GM12878 (cell line): ENCODE measurements at regions of chr11 and their contacts with region 1.

Region 1: GRCh38 chr11:118791111-118791965 is at the start of gene DDX6:
- DNase-seq: peak; percentile 19
- ATAC-seq: peak; percentile 69
- H3K4me3 ChIP-seq: peak within 1 kb of the TSS; percentile 81
- H3K27ac ChIP-seq: peak within 1 kb of the TSS; percentile 100
- H3K4me1 ChIP-seq: no peaks in the 10 kb centered on the region; the same call in 1 of the 2 replicates
- H3K27me3 ChIP-seq: no peaks in the 10 kb centered on the region
- CTCF ChIP-seq: peak; percentile 21 to 41 (median 32); a peak in 3 of 6 replicates
- EP300 ChIP-seq: no peak
- POLR2A ChIP-seq: peak; percentile 82
- RAD21 ChIP-seq: peak; percentile 14; the same call in 1 of the 2 replicates
- polyA plus RNA-seq, gene DDX6: 6.6 to 20.0 TPM

Region 2: GRCh38 chr11:118689851-118690552 is 101.3 kb before region 1 on chr11:
- CTCF ChIA-PET with region 1: interaction called, 68 read pairs
- POLR2A ChIA-PET with region 1: interaction called, 3 read pairs
- RAD21 ChIA-PET with region 1: interaction called, 26 read pairs
- SMC1A ChIA-PET with region 1: interaction called, 16 read pairs
- in situ Hi-C with region 1: no loop called
- intact Hi-C with region 1: loop called (anchors 5 kb)
- DNase-seq: no peak
- ATAC-seq: peak; percentile 97
- H3K4me3 ChIP-seq: peak overlapping the region; percentile 56; the same call in 1 of the 2 replicates
- H3K27ac ChIP-seq: no peak overlapping the region
- H3K4me1 ChIP-seq: peaks cover 35% of the 10 kb centered on the region
- H3K27me3 ChIP-seq: no peaks in the 10 kb centered on the region; a peak in 1 of 4 replicates
- CTCF ChIP-seq: peak; percentile 93 to 98 (median 95)
- EP300 ChIP-seq: no peak
- POLR2A ChIP-seq: no peak
- RAD21 ChIP-seq: peak; percentile 88

Region 3: DNA sequence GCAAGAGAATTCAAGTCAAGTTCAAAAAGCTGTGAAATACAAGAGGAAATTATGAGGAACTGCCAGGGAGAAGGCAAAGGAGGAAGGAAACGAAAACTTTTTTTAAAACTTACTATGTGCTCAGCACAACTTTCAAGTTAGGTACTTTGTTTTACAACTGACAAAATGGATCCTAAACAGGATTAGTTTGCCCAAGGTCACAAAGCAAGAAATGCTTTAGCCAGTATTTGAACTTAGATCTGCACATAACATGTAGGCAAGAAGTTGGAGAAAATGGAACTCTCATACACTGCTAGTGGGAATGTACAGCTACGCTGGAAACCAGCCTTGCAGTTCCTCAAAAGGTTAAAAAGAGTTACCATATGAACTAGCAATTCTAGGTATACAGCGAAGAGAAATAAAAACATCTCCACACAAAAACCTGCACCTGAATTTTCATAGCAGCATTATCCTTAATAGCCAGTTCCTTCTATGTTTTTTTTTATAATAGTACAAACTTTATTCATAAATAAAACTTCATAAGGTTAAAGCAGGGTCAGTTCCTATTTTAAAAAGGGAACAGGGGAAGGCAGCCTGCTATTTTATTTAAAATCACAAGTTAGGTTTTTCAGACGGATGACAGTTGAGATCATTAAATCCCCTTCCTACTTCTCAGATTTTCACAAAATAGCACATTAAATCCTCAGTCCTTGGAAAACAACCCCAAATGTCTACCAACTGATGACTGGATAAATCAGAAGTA is 19.6 kb before region 1 on chr11:
- CTCF ChIA-PET with region 1: interaction called, 5 read pairs
- POLR2A ChIA-PET with region 1: interaction called, 4 read pairs
- RAD21 ChIA-PET with region 1: interaction called, 9 read pairs
- SMC1A ChIA-PET with region 1: interaction called, 18 read pairs
- in situ Hi-C with region 1: no loop called
- intact Hi-C with region 1: no loop called
- DNase-seq: no peak
- ATAC-seq: 0 out of 3 replicates have a peak, but pooled peaks have one; percentile 23
- H3K4me3 ChIP-seq: no peak overlapping the region
- H3K27ac ChIP-seq: no peak overlapping the region
- H3K4me1 ChIP-seq: no peaks in the 10 kb centered on the region; the same call in 1 of the 2 replicates
- H3K27me3 ChIP-seq: no peaks in the 10 kb centered on the region
- CTCF ChIP-seq: no peak
- EP300 ChIP-seq: no peak
- POLR2A ChIP-seq: no peak
- RAD21 ChIP-seq: no peak

Region 4: DNA sequence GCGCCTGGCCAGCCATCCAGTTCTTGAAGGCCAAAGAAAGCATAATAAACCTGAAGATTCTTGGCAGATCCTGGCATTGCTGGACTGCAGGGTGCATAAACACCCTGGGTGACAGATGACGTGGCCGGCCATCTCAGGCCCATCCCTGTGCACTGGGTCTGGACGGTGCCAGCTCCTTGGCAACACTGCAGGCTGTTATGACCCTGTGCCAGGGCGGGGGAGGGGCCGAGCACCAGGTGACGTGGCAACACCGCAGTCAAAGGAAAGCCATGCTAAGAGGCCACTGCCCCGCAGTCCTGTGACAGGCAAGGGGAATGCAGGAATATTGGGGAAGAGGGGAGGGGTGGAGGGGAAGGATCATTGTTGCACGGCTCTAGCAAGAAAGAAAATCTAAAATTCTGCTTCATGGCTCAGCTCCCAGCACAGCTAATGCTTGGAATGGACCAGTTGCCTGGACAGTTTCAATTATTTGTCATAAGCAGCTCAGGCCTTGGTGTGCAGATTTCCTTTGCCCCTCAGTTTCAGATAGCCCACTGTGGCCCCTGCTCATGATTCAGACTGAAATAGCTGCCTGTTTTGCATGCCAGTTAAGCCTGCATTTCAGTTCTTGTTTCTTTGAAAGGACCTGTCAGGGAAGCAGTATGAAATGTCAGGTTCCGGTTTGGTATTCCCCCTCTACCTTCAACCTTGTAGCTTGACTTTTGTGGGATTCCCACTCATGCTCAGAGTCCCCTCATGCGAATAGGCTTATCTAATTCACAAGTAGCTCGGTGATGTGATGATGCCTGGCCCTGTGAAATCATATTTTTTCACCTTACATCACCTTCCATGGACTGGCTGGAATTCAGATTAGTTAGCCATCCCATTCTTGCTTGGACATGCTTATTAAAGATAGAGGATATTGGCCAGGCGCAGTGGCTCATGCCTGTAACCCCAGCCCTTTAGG is 29.3 kb after region 1 on chr11:
- CTCF ChIA-PET with region 1: interaction called, 62 read pairs
- POLR2A ChIA-PET with region 1: interaction called, 69 read pairs
- RAD21 ChIA-PET with region 1: interaction called, 67 read pairs
- SMC1A ChIA-PET with region 1: interaction called, 130 read pairs
- in situ Hi-C with region 1: no loop called
- intact Hi-C with region 1: loop called (anchors 1 kb)
- DNase-seq: peak; percentile 99
- ATAC-seq: peak; percentile 93
- H3K4me3 ChIP-seq: peak overlapping the region; percentile 23; the same call in 1 of the 2 replicates
- H3K27ac ChIP-seq: peak overlapping the region; percentile 94
- H3K4me1 ChIP-seq: peaks cover 50% of the 10 kb centered on the region
- H3K27me3 ChIP-seq: no peaks in the 10 kb centered on the region
- CTCF ChIP-seq: no peak
- EP300 ChIP-seq: peak; percentile 96 to 97
- POLR2A ChIP-seq: peak; percentile 13; the same call in 1 of the 2 replicates
- RAD21 ChIP-seq: 0 out of 2 replicates have a peak, but pooled peaks have one; percentile 27

Region 5: DNA sequence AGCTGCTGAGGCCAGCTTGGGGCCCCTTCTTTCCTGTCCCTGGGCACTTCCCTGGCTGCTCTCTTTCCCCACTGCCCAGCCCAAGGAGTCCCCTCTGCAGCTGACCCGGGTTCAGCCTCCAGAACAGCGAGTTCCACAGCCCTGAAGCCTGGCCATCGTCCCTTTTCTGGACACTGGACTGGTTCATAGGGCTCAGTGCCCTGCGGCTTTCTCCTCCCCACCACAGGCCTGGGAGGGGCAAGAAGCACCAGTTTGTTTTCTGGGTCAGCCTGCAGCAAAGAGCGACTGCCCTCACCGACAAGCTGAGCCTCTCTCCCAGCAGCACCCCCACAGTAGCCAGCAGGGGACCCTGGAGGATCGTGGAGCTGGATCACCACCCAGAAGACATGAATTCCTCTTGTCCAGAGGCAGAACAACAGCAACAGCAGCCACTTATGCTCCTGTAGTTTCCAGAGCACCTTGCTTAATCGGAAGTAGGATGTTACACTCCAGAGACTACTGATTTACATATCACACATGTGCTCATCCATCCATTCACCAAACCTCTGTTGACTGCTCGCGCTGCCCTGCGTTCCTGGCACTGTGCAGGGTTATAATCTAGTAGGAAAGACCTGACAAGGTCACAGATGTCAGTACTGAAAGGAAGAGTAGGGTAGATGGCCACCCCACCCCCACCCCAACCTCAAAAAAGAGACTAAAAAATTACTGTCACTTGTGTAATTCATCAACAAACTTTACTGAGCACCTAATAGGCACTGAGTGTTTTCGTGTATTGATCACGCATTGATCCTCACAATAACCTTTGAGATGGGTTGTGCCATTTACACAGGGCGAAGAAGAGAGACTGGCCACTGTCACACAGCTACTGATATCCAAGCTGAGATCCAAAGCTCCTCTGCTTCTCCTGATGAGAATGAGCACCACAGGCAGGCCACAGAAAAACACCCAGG is 79.3 kb after region 1 on chr11:
- CTCF ChIA-PET with region 1: interaction called, 5 read pairs
- POLR2A ChIA-PET with region 1: interaction called, 9 read pairs
- RAD21 ChIA-PET with region 1: interaction called, 15 read pairs
- SMC1A ChIA-PET with region 1: interaction called, 14 read pairs
- in situ Hi-C with region 1: no loop called
- intact Hi-C with region 1: loop called (anchors 5 kb)
- DNase-seq: peak; percentile 57
- ATAC-seq: peak; percentile 87
- H3K4me3 ChIP-seq: peak overlapping the region; percentile 7; the same call in 1 of the 2 replicates
- H3K27ac ChIP-seq: no peak overlapping the region
- H3K4me1 ChIP-seq: peaks cover 30% of the 10 kb centered on the region
- H3K27me3 ChIP-seq: peaks cover 3 to 7% of the 10 kb centered on the region in 2 experiments
- CTCF ChIP-seq: no peak
- EP300 ChIP-seq: no peak
- POLR2A ChIP-seq: no peak
- RAD21 ChIP-seq: no peak

Region 6: GRCh38 chr11:118883368-118884071 is 92.2 kb after region 1 on chr11 and contains the start of gene CXCR5:
- CTCF ChIA-PET with region 1: interaction called, 19 read pairs
- POLR2A ChIA-PET with region 1: interaction called, 22 read pairs
- RAD21 ChIA-PET with region 1: interaction called, 53 read pairs
- SMC1A ChIA-PET with region 1: interaction called, 14 read pairs
- in situ Hi-C with region 1: no loop called
- intact Hi-C with region 1: no loop called
- DNase-seq: no peak
- ATAC-seq: peak; percentile 81
- H3K4me3 ChIP-seq: peak within 1 kb of the TSS; percentile 13; the same call in 1 of the 2 replicates
- H3K27ac ChIP-seq: no peak within 1 kb of the TSS
- H3K4me1 ChIP-seq: peaks cover 43% of the 10 kb centered on the region
- H3K27me3 ChIP-seq: peaks cover 3 to 9% of the 10 kb centered on the region in 2 experiments; a peak in 2 of 4 replicates
- CTCF ChIP-seq: peak in 2 of 3 experiments; percentile 8 to 27; a peak in 2 of 6 replicates
- EP300 ChIP-seq: no peak
- POLR2A ChIP-seq: peak; percentile 58
- RAD21 ChIP-seq: peak; percentile 30; the same call in 1 of the 2 replicates
- polyA plus RNA-seq, gene CXCR5: 0.03 to 0.11 TPM

Region 7: GRCh38 chr11:118907051-118908042 is 116.0 kb after region 1 on chr11:
- CTCF ChIA-PET with region 1: interaction called, 5 read pairs
- POLR2A ChIA-PET with region 1: interaction called, 10 read pairs
- RAD21 ChIA-PET with region 1: interaction called, 3 read pairs
- SMC1A ChIA-PET with region 1: interaction called, 3 read pairs
- in situ Hi-C with region 1: no loop called
- intact Hi-C with region 1: no loop called
- DNase-seq: peak; percentile 61
- ATAC-seq: peak; percentile 98
- H3K4me3 ChIP-seq: no peak overlapping the region
- H3K27ac ChIP-seq: no peak overlapping the region
- H3K4me1 ChIP-seq: peaks cover 10% of the 10 kb centered on the region
- H3K27me3 ChIP-seq: no peaks in the 10 kb centered on the region
- CTCF ChIP-seq: peak; percentile 89 to 99 (median 93); a peak in 5 of 6 replicates
- EP300 ChIP-seq: no peak
- POLR2A ChIP-seq: 0 out of 2 replicates have a peak, but pooled peaks have one; percentile 13
- RAD21 ChIP-seq: peak; percentile 98